ENCODE measurements at regions of chr1 and their contacts with region 1.

Region 1: GRCh38 chr1:197336571-197336970 is 68.5 kb downstream of the CRB1 start:
- DNase-seq: no peak
- H3K4me3 Mint-ChIP-seq: no peak overlapping the region
- H3K27ac Mint-ChIP-seq: no peak overlapping the region
- H3K4me1 Mint-ChIP-seq: peaks cover 1% of the 10 kb centered on the region
- H3K27me3 Mint-ChIP-seq: peaks cover 10% of the 10 kb centered on the region

Region 2: DNA sequence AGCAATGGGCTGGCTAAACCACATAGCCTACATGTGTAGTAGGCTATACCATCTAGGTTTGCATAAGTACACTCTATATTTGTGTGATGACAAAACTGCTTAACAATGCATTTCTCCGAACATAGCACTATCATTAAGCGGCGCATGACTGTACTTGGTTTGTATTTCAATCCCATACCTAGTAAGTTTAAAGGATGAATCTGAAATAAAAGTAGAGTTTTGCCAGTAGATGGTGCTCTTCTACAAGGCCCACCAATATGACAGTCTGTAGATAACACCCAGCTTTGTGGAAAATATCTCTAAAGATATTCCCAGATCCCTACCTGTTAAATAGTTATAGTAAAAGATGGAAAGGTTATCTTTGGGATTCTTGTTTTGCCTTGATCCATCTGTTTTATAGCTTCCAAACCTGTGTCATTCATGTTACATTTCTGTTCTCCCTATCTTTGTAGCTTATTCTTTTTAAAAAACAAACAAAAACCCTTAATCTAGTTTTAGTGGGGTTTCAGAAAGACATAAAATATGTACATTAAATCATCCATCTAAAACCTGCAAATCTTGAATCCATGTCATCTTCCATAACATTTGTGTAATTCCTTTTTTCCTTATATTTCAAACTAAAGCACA is 156.2 kb before region 1 on chr1:
- CTCF ChIA-PET with region 1: interaction called, 11 read pairs
- POLR2A ChIA-PET with region 1: no interaction called
- DNase-seq: no peak
- H3K4me3 Mint-ChIP-seq: no peak overlapping the region
- H3K27ac Mint-ChIP-seq: no peak overlapping the region
- H3K4me1 Mint-ChIP-seq: peaks cover under 1% of the 10 kb centered on the region
- H3K27me3 Mint-ChIP-seq: no peaks in the 10 kb centered on the region

Measured in activated CD4-positive, alpha-beta memory T cell treated with anti-CD3 and anti-CD28 coated beads, Interleukin-2, amount 10 ng/mL, durations not matched to agents 7 days and 5 days (primary cell).